HAP-1 (cell line): ENCODE measurements at regions of chr18 and their contacts with region 1.

Region 1: DNA sequence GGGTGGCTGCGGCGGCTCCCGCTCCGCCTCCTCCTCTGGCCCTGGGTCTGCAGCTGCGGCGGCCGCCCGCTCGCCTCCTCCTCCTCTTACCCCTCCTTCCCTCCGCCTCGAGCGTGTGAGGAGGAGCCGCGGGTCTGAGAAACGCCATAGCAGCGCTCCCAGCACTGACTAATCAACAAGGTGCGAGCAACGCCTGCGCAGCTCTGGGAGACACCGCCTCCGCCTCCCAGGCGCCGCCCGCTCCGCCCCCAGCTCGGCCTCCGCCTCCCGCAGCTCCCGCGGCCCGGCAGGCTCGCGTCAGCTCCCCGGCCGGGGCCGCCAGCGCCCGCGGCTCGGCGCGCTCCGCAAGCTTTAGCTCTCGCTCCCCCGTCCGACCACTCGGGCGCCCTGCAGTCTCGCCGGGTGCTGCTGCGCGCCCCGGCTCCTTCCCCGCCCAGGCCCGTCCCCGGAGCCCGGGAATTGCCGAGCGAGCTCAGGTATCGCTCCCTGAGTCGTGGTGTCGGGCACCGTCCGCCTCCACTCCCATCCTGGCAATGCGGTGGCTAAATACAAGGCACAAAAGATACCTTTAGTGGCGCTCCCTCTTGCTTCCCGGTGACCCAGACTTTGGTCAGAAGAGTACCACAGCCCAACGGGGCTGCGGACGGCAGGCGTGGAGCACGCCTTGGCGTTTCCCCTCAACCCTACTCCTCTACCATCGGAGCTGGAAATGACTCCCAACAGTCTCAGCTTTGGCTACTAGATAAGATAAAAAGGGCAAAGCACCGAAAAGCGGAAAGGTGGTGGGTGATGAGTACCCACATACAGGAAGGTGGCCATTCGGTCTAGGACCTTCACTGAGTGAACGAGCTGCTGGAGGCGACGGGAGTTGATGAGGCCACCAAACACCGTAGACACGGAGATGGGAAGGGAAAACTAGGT is at the start of gene GAREM1:
- DNase-seq: peak; percentile 94
- H3K4me3 ChIP-seq: peak within 1 kb of the TSS; percentile 63
- H3K4me1 ChIP-seq: peaks cover 7% of the 10 kb centered on the region
- H3K27me3 ChIP-seq: no peaks in the 10 kb centered on the region

Region 2: GRCh38 chr18:32110005-32110404 is 361.0 kb before region 1 on chr18:
- in situ Hi-C with region 1: no loop called
- DNase-seq: no peak
- H3K4me3 ChIP-seq: no peak overlapping the region
- H3K4me1 ChIP-seq: no peaks in the 10 kb centered on the region
- H3K27me3 ChIP-seq: no peaks in the 10 kb centered on the region

Region 3: DNA sequence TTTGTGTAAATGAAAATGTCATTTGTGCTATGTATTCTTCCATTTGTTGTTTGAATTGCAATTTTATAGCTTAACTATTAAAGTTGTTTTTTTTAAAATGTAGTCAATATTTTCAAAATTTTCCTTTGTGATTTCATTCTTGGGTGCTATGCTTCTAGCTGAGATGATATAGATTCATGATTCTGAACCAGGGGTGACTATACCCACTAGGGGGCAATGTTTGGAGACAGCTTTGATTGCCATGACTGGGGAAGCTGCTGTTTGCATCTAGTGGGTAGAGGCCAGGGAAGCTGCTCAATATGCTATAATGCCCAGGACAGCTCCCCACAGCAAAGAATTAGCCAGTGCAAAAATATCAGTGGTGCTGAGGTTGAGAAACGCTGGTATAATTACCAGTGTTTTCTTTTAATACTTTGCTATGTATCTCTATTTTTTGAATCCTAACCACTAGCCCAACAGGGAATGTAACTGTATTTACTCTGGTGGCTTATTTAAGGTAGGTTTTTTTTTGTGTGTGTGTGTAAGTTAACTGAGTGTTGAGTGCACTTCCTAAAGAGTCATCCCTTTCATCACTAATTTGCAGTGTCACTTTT is 181.4 kb before region 1 on chr18:
- in situ Hi-C with region 1: loop called (anchors 10 kb)
- DNase-seq: peak; percentile 40 to 75
- H3K4me3 ChIP-seq: no peak overlapping the region
- H3K4me1 ChIP-seq: no peaks in the 10 kb centered on the region
- H3K27me3 ChIP-seq: no peaks in the 10 kb centered on the region

Region 4: DNA sequence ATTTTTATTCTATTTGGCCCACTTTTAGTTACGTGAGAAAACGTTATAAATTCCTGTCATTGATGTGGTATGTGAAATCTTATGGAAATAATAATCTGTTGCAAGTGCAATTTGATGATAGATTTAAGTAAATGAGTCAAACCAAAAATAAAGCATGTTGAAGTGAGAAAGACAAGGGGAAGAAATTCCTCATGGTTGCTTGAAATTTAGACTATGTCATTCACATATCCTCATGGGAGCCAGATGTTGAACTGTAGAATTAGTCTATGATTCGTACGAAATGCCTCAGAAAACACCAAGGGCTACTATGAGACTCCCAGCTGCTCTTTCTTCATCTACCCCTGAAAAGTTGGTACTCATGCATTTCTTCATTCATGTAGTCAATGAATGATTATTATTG is 246.2 kb after region 1 on chr18:
- in situ Hi-C with region 1: no loop called
- DNase-seq: no peak
- H3K4me3 ChIP-seq: no peak overlapping the region
- H3K4me1 ChIP-seq: no peaks in the 10 kb centered on the region
- H3K27me3 ChIP-seq: peaks cover 5% of the 10 kb centered on the region; the same call in 1 of the 2 replicates